ENCODE measurements at regions of chr7 and their contacts with region 1.

Region 1: GRCh38 chr7:26365077-26365900 is 73.6 kb downstream of the SNX10 start:
- DNase-seq: peak; percentile 57 to 74
- H3K4me3 ChIP-seq: no peak overlapping the region
- H3K27ac ChIP-seq: no peak overlapping the region
- H3K4me1 ChIP-seq: no peaks in the 10 kb centered on the region
- H3K27me3 ChIP-seq: no peaks in the 10 kb centered on the region
- CTCF ChIP-seq: peak; percentile 97

Region 2: DNA sequence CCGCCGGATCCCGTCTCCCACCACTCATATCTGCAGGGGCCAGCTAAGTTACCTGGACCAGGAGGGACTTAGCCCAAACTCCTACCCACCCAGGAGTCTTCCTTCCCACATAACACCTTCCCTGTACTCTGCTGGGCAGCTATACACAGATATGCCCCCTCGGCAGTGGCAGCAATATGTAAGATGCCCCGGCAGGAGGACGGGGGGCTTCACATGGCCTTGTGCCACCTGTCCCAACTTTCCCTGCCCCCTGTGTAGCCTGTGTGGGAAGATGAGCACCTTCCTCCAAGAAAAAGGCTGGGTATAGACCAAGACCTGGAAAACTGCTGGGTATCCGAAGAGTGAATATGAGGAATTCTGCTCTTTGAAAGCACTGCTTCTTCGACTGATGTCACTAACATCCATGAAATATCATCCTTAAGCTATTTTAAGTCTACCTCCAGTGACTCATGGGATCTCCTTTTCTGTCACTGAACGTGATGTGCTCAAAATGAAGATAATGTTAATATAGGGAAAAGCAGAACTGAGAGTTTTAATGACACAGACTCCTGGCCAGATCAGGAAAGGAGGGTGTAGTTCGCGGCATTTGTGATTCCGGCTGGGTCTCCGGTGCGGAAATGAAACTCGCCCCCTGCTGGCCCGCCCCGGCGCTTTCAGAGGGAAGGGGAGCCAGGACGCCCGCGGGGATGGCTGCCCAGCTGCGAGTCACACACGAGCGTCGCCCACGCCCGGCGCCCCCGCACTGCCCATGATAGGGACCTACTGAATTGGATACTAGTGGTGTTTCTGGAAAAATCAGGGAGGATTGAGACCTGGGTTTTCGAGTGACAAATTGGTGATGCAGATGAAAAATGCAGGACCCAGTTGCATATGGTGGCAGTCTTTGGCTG is 470.1 kb before region 1 on chr7:
- CTCF ChIA-PET with region 1: interaction called, 21 read pairs
- POLR2A ChIA-PET with region 1: no interaction called
- intact Hi-C with region 1: loop called (anchors 1 kb)
- DNase-seq: peak in 1 of 2 experiments; percentile 24
- H3K4me3 ChIP-seq: peak overlapping the region; percentile 40; the same call in 1 of the 2 replicates
- H3K27ac ChIP-seq: no peak overlapping the region
- H3K4me1 ChIP-seq: no peaks in the 10 kb centered on the region
- H3K27me3 ChIP-seq: no peaks in the 10 kb centered on the region
- CTCF ChIP-seq: peak; percentile 71

Region 3: DNA sequence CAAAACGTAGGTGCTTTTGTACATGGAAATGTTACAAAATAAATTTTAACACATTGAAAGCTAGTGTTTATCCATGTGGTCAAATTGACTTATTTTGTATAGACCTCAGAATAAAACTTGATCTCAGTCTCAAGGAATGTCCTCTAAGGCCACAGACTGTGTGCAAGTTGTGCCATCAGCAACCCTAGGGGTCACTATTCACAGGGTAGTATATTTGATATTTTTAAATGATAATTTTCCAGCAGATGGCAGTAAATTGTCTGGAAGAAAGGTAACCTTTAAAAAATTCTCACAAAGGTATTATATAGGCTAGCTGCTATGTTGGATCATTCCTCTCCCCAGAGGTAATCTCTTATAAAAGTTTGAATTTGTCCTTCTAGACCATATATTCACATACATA is 86.5 kb before region 1 on chr7:
- CTCF ChIA-PET with region 1: no interaction called
- POLR2A ChIA-PET with region 1: no interaction called
- intact Hi-C with region 1: loop called (anchors 1 kb)
- DNase-seq: peak in 1 of 2 experiments; percentile 47
- H3K4me3 ChIP-seq: no peak overlapping the region
- H3K27ac ChIP-seq: no peak overlapping the region
- H3K4me1 ChIP-seq: no peaks in the 10 kb centered on the region
- H3K27me3 ChIP-seq: no peaks in the 10 kb centered on the region
- CTCF ChIP-seq: peak; percentile 68

Region 4: DNA sequence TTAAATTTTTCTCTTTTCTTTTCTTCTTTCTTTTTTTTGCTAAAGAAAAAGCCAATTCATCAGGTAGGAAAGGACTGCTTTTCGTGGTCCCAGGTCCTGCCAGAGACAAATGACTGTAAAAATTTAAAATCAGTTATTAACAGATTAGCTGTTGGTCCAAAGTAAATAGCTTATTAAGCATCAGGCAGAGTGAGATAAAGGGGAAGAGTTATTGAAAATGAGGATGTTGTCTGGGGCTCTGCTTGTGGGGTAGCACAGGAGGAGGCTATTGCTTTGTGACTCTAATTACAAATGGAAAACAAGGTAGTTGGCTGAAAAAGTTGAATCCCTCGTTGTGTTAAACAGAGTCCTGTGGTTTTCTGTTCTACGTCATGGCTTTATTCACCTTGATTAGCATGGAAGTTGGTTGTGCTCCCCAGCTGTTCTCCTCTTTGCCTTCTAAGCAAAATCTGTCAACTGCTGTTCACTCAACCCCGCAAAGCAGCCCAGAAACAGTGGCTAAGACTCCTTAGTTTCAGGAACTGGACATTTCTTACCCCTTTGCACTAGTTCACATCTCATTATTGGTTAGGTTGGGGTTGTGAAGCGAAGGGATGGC is 55.2 kb after region 1 on chr7:
- CTCF ChIA-PET with region 1: no interaction called
- POLR2A ChIA-PET with region 1: no interaction called
- intact Hi-C with region 1: no loop called
- DNase-seq: no peak
- H3K4me3 ChIP-seq: no peak overlapping the region
- H3K27ac ChIP-seq: no peak overlapping the region
- H3K4me1 ChIP-seq: peaks cover 19% of the 10 kb centered on the region
- H3K27me3 ChIP-seq: no peaks in the 10 kb centered on the region
- CTCF ChIP-seq: no peak

Region 5: GRCh38 chr7:26549281-26549943 is 184.1 kb after region 1 on chr7:
- CTCF ChIA-PET with region 1: interaction called, 8 read pairs
- POLR2A ChIA-PET with region 1: no interaction called
- intact Hi-C with region 1: loop called (anchors 2 kb)
- DNase-seq: peak; percentile 96 to 100
- H3K4me3 ChIP-seq: peak overlapping the region; percentile 3; the same call in 1 of the 2 replicates
- H3K27ac ChIP-seq: peak overlapping the region; percentile 95
- H3K4me1 ChIP-seq: peaks cover 39% of the 10 kb centered on the region
- H3K27me3 ChIP-seq: no peaks in the 10 kb centered on the region
- CTCF ChIP-seq: peak; percentile 60; the same call in 1 of the 2 replicates

Region 6: GRCh38 chr7:27160546-27161213 is 795.4 kb after region 1 on chr7:
- CTCF ChIA-PET with region 1: interaction called, 24 read pairs
- POLR2A ChIA-PET with region 1: no interaction called
- intact Hi-C with region 1: loop called (anchors 1 kb)
- DNase-seq: peak; percentile 70 to 88
- H3K4me3 ChIP-seq: peak overlapping the region; percentile 71
- H3K27ac ChIP-seq: no peak overlapping the region
- H3K4me1 ChIP-seq: 0 out of 2 replicates have a peak, but pooled peaks cover 3% of the 10 kb centered on the region
- H3K27me3 ChIP-seq: no peaks in the 10 kb centered on the region
- CTCF ChIP-seq: peak; percentile 100

Region 7: DNA sequence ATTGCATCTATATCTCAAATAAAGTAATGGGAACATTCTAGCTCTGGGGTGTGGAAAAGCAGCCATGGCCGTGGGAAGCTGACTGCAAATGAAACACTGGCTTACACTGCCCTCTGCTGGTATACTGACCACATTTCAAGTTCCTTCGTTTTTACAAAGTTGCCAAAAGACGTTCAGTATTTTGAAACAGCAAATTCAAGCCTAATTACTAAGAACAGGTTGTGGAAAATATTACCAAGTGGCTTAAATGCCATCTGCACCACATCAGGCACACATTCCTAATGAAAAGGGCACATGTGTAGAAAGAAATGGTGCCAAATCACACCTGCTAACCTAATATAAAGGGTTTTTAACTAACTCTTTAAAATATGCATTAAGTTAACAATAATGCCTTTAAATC is 1731.4 kb after region 1 on chr7:
- CTCF ChIA-PET with region 1: interaction called, 4 read pairs
- POLR2A ChIA-PET with region 1: no interaction called
- intact Hi-C with region 1: loop called (anchors 1 kb)
- DNase-seq: peak; percentile 52 to 64
- H3K4me3 ChIP-seq: no peak overlapping the region
- H3K27ac ChIP-seq: no peak overlapping the region
- H3K4me1 ChIP-seq: 0 out of 2 replicates have a peak, but pooled peaks cover 3% of the 10 kb centered on the region
- H3K27me3 ChIP-seq: no peaks in the 10 kb centered on the region
- CTCF ChIP-seq: peak; percentile 98